Body of pancreas (tissue), 4 donors: ENCODE measurements at regions of chr1 and their contacts with region 1.

Region 1: GRCh38 chr1:9129266-9130041 is 552 bp upstream of the GPR157 start:
- DNase-seq: peak; percentile 92 to 95 (median 93)
- ATAC-seq: peak; percentile 79
- H3K4me3 ChIP-seq: no peak overlapping the region
- H3K27ac ChIP-seq: peak overlapping the region; percentile 82 to 90 (median 86)
- H3K4me1 ChIP-seq: peaks cover 30% of the 10 kb centered on the region
- H3K27me3 ChIP-seq: no peaks in the 10 kb centered on the region
- CTCF ChIP-seq: no peak
- POLR2A ChIP-seq: no peak

Region 2: GRCh38 chr1:9181176-9181906 is 51.9 kb after region 1 on chr1:
- intact Hi-C with region 1: loop called (anchors 5 kb)
- DNase-seq: peak; percentile 53 to 68 (median 66)
- ATAC-seq: peak; percentile 62
- H3K4me3 ChIP-seq: peak overlapping the region; percentile 51
- H3K27ac ChIP-seq: peak overlapping the region in 3 of 4 donors; percentile 56 to 68 (median 68)
- H3K4me1 ChIP-seq: peaks cover 34% of the 10 kb centered on the region
- H3K27me3 ChIP-seq: no peaks in the 10 kb centered on the region
- CTCF ChIP-seq: peak; percentile 69 to 90 (median 80)
- POLR2A ChIP-seq: no peak